Left cardiac atrium (tissue), 4 donors: ENCODE measurements at regions of chr3 and their contacts with region 1.

Region 1: GRCh38 chr3:14791343-14791945 is 27.3 kb upstream of the FGD5 start:
- DNase-seq: peak; percentile 81
- ATAC-seq: peak; percentile 45 to 53

Region 2: GRCh38 chr3:14391033-14391432 is 400.4 kb before region 1 on chr3:
- intact Hi-C with region 1: no loop called
- DNase-seq: peak; percentile 52
- ATAC-seq: peak; percentile 72 to 74

Region 3: DNA sequence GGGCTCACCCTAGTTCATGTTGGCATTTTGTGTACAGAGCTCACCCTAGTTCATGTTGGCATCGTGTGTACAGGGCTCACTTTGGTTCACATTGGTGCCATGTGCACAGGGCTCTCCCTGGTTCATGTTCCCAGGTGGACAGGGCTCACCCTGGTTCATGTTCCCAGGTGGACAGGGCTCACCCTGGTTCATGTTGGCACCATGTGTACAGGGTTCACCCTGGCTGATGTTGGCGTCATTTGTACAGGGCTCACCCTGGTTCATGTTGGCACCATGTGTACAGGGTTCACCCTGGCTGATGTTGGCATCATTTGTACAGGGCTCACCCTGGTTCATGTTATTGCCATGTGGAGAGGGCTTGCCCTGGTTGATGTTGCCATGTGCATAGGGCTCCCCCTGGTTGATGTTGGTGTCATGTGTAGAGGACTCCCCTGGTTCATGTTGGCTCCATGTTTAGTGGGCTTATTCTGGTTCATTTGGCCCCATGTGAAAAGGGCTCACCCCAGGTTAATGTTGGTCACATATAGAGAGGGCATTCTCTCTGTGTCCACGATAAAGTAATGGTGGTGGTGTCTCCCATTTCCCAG is 124.3 kb after region 1 on chr3:
- intact Hi-C with region 1: loop called (anchors 2 to 5 kb)
- DNase-seq: no peak
- ATAC-seq: peak in 1 of 2 donors; percentile 27

Region 4: GRCh38 chr3:14921078-14921616 is 129.7 kb after region 1 on chr3:
- intact Hi-C with region 1: loop called (anchors 2 to 5 kb)
- DNase-seq: peak; percentile 89
- ATAC-seq: peak; percentile 93

Region 5: DNA sequence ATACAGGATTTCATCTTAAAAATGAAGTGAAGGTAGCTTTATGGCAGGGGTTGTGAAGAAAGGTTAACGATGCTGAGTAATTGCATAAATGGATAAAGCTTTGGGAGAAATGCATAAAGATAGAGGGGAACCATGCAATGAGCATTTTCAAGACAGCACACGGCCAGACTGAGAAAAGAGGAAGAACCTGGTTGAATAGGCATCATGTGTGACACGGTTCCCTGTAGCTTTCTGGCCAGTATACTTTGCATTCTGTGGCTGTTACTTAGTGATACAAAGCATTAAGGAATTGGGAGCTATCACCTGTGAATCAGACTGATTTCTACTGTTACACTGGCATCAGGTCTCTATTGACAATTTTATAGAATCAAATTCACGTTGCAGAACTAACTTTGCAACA is 189.2 kb after region 1 on chr3:
- intact Hi-C with region 1: no loop called
- DNase-seq: no peak
- ATAC-seq: no peak